ENCODE measurements at regions of chr6 and their contacts with region 1.

Region 1: GRCh38 chr6:43174263-43175112 is 3.4 kb downstream of the SRF start:
- DNase-seq: peak; percentile 91 to 100 (median 98)

Region 2: GRCh38 chr6:43247113-43247999 is 72.9 kb after region 1 on chr6:
- intact Hi-C with region 1: loop called (anchors 5 kb)
- DNase-seq: peak; percentile 73 to 97 (median 92)

Measured in head of caudate nucleus (tissue), 42 donors.